Activated CD8-positive, alpha-beta T cell treated with anti-CD3 and anti-CD28 coated beads, Interleukin-2, amount 10 ng/mL, durations not matched to agents 7 days and 5 days (primary cell): ENCODE measurements at regions of chr1 and their contacts with region 1.

Region 1: DNA sequence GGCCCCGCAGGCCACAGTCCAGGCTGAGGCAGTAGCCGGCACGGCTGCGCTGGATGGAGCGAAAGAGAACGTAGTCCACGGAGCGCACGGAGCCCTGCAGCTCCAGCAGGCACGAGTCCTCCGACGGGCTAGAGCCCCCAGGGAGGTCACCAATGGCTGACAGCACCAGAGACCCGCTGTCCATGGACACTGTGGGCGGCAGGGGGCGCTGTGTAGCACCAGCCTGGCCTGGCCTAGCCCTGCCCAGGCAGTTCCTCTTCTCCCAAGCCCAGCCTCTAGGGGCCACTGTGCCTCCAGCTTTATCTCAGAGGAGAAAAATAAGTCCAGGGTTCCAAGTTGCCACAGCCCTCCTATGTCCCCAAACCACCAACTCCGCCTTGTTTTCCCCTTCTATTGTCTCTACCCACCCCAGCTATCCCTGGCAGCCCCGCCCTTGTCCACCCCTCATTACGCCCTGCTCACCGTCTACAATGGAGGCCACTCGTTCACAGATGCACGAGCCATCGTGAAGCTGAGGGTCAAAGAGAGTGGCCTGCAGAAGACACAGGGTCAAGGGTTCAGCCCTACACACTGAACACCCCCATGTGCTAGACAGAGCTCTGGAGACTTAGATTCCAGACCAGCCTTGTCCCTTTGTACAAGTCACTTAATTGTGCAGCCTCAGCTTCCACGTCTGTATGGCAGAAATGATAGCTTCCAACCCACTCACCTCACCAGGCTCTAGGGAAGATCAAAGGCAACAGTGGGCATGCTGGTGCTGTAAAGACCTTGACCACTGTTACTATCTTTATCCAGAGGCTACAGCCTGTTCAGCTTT is 4.4 kb downstream of the ENTREP3 start:
- DNase-seq: peak; percentile 97
- ATAC-seq: peak; percentile 96
- H3K4me3 Mint-ChIP-seq: peak overlapping the region; percentile 69
- H3K27ac Mint-ChIP-seq: peak overlapping the region; percentile 77
- H3K4me1 Mint-ChIP-seq: peaks cover 34% of the 10 kb centered on the region
- H3K27me3 Mint-ChIP-seq: no peaks in the 10 kb centered on the region

Region 2: GRCh38 chr1:155166471-155167165 is 84.2 kb before region 1 on chr1:
- CTCF ChIA-PET with region 1: no interaction called
- POLR2A ChIA-PET with region 1: no interaction called
- DNase-seq: no peak
- ATAC-seq: no peak
- H3K4me3 Mint-ChIP-seq: no peak overlapping the region
- H3K27ac Mint-ChIP-seq: no peak overlapping the region
- H3K4me1 Mint-ChIP-seq: peaks cover 18% of the 10 kb centered on the region
- H3K27me3 Mint-ChIP-seq: no peaks in the 10 kb centered on the region

Region 3: DNA sequence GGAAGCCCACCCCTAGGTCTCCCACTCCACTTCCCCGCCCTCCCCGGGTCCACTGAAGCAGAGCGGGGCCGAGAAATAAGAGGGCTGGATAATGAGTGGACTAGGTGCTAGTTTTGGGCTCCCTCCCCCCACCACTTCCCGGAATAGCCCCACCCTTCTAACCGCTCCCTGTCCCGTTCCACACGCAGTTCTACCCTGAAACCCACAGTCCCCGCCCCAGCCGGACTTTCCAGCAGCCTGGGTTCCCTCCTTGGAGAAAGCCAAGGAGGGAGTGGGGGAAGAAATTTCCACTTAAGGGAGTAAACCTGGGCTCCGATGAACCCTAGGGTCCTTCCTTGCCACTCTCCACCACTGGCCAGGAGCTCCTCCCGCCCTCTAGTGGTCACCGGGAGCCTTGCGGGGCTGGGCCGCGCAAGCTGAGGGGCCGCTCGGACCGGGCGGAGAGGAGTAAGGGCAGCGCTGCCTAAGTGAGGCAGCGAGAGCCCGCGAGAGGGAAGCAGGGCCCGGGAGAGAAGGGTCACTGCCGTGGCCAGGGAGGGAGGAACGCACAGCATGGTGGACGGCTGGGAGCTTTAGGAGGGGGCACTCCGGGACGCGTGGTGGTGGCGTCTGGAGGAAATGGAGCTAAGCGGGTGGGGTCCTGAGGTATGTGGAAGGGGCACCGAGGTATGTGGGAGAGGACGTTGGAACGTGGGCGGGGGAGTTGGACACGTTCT is 57.4 kb before region 1 on chr1:
- CTCF ChIA-PET with region 1: interaction called, 18 read pairs
- POLR2A ChIA-PET with region 1: no interaction called
- DNase-seq: peak; percentile 82
- ATAC-seq: peak; percentile 49
- H3K4me3 Mint-ChIP-seq: peak overlapping the region; percentile 84
- H3K27ac Mint-ChIP-seq: peak overlapping the region; percentile 98
- H3K4me1 Mint-ChIP-seq: peaks cover 40% of the 10 kb centered on the region
- H3K27me3 Mint-ChIP-seq: no peaks in the 10 kb centered on the region

Region 4: GRCh38 chr1:155227261-155228095 is 23.4 kb before region 1 on chr1:
- CTCF ChIA-PET with region 1: interaction called, 30 read pairs
- POLR2A ChIA-PET with region 1: interaction called, 23 read pairs
- DNase-seq: peak; percentile 99
- ATAC-seq: peak; percentile 96
- H3K4me3 Mint-ChIP-seq: peak overlapping the region; percentile 91
- H3K27ac Mint-ChIP-seq: peak overlapping the region; percentile 94
- H3K4me1 Mint-ChIP-seq: peaks cover 33% of the 10 kb centered on the region
- H3K27me3 Mint-ChIP-seq: no peaks in the 10 kb centered on the region

Region 5: GRCh38 chr1:155267373-155267772 is 16.5 kb after region 1 on chr1:
- CTCF ChIA-PET with region 1: interaction called, 120 read pairs
- POLR2A ChIA-PET with region 1: interaction called, 20 read pairs
- DNase-seq: no peak
- ATAC-seq: no peak
- H3K4me3 Mint-ChIP-seq: no peak overlapping the region
- H3K27ac Mint-ChIP-seq: no peak overlapping the region
- H3K4me1 Mint-ChIP-seq: peaks cover 43% of the 10 kb centered on the region
- H3K27me3 Mint-ChIP-seq: no peaks in the 10 kb centered on the region

Region 6: DNA sequence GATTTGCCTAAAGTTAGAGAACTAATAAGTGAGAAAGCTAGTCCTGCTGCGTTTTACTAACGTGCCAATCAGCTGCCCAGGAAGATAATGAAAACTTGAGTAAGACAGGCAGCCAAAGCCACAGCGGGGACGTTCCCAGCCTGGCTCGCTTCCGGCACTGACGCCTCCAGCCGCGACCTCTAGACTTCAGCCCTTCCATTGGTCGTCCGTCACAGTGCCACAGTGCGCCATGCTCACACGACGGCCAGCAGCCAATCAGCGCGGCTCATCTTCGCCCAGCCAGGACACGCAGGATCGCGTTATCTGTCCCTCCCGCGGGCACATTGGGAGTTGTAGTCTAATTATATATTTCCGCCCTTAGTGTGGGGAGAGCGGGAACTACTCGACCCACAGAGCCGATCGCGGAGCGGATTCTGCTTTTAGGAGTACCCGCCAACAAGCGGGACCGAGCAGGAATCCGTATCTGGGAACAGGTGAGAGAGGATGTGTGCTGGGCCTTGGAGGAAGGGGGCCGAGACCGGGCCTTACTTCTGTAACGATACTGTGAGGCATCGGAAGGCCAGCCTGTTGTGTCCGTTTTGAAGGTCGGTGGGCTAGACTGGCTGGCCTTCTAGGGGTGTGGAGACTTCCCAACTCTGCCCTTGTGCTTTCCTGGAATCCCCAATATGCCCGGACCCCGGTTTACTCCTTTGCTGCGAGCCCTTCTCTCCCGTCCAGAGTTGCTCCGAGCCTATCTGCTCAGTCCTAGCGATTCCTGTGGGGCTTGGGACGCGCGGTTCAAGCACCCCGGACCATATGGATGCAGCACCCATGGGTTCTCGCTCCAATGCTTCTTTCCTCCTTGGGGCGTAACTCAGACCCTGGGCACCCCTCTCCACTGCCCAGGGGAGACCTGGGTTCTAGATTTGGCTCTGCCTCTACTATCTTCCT is 57.9 kb after region 1 on chr1 and contains the start of gene FDPS:
- CTCF ChIA-PET with region 1: interaction called, 81 read pairs
- POLR2A ChIA-PET with region 1: interaction called, 9 read pairs
- DNase-seq: peak; percentile 99
- ATAC-seq: peak; percentile 99
- H3K4me3 Mint-ChIP-seq: peak within 1 kb of the TSS; percentile 98
- H3K27ac Mint-ChIP-seq: peak within 1 kb of the TSS; percentile 93
- H3K4me1 Mint-ChIP-seq: peaks cover 42% of the 10 kb centered on the region
- H3K27me3 Mint-ChIP-seq: no peaks in the 10 kb centered on the region
- total RNA-seq, gene FDPS: 270 to 271 TPM

Region 7: GRCh38 chr1:155323798-155324610 is 73.2 kb after region 1 on chr1:
- CTCF ChIA-PET with region 1: interaction called, 190 read pairs
- POLR2A ChIA-PET with region 1: interaction called, 18 read pairs
- DNase-seq: peak; percentile 93
- ATAC-seq: peak; percentile 86
- H3K4me3 Mint-ChIP-seq: peak overlapping the region; percentile 83
- H3K27ac Mint-ChIP-seq: peak overlapping the region; percentile 77
- H3K4me1 Mint-ChIP-seq: peaks cover 47% of the 10 kb centered on the region
- H3K27me3 Mint-ChIP-seq: no peaks in the 10 kb centered on the region

Region 8: DNA sequence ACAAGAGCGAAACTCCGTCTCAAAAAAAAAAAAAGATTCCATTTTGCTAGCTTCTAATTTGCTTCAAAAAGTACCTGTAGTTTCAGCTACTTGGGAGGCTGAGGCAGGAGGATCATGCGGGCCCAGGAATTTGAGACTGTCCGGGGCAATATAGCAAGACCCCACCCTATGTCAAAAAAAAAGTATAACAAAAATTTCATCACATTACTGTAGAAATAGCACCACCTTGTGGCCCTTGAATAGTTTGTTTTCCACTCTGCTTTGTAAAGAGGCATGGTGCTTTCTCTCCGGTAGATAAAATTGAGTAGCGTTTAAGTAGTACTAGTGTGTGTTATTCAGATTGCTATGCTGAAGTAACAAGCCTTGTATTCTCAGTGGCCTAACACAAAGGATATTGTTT is 340.9 kb after region 1 on chr1:
- CTCF ChIA-PET with region 1: interaction called, 28 read pairs
- POLR2A ChIA-PET with region 1: no interaction called
- DNase-seq: peak; percentile 57
- ATAC-seq: peak; percentile 63
- H3K4me3 Mint-ChIP-seq: no peak overlapping the region
- H3K27ac Mint-ChIP-seq: no peak overlapping the region
- H3K4me1 Mint-ChIP-seq: peaks cover 3% of the 10 kb centered on the region
- H3K27me3 Mint-ChIP-seq: no peaks in the 10 kb centered on the region